CD4-positive, alpha-beta T cell (primary cell): ENCODE measurements at regions of chr10 and their contacts with region 1.

Region 1: GRCh38 chr10:61903221-61903927 is 1.9 kb downstream of the ARID5B start:
- DNase-seq: peak; percentile 42 to 84 (median 62)
- ATAC-seq: peak; percentile 33
- H3K4me3 ChIP-seq: peak overlapping the region; percentile 92
- H3K4me3 Mint-ChIP-seq: peak overlapping the region; percentile 94
- H3K27ac ChIP-seq: peak overlapping the region; percentile 92 to 98
- H3K27ac Mint-ChIP-seq: peak overlapping the region; percentile 91
- H3K4me1 ChIP-seq: peaks cover 4% of the 10 kb centered on the region
- H3K4me1 Mint-ChIP-seq: peaks cover 51% of the 10 kb centered on the region
- H3K27me3 ChIP-seq: no peaks in the 10 kb centered on the region
- H3K27me3 Mint-ChIP-seq: no peaks in the 10 kb centered on the region
- CTCF ChIP-seq: peak; percentile 49

Region 2: DNA sequence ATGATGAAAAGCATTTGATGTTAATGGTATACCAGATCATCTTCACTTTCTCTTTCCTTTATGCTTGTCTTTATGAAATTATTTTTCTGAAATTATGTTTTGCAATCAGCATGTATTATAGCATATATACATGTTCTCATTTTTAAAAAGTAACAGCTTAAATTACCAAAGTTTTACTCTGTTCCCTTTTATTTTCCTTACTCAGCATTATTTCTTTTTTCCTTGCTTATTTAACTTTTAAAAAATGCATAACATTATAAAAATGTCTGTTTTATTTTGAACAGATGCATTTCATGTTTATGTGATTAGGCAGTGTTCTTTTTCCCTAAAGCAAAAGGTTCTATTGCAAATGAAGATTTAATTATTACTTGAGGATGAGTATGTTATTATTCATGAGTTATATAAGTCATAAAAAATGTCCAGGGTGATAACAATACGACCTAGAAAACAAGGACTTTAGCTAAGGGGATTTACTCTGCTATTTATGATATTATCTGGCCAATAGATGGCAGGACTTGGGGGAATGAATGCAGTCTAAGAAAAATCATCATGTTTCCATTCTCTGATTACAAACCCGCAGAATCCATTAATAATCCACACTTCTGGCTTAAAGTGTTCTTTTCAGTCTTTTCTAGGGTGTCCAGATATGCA is 202.2 kb before region 1 on chr10:
- CTCF ChIA-PET with region 1: no interaction called
- POLR2A ChIA-PET with region 1: no interaction called
- intact Hi-C with region 1: no loop called
- DNase-seq: no peak
- ATAC-seq: no peak
- H3K4me3 ChIP-seq: no peak overlapping the region
- H3K4me3 Mint-ChIP-seq: no peak overlapping the region
- H3K27ac ChIP-seq: no peak overlapping the region
- H3K27ac Mint-ChIP-seq: no peak overlapping the region
- H3K4me1 ChIP-seq: no peaks in the 10 kb centered on the region
- H3K4me1 Mint-ChIP-seq: no peaks in the 10 kb centered on the region
- H3K27me3 ChIP-seq: no peaks in the 10 kb centered on the region
- H3K27me3 Mint-ChIP-seq: no peaks in the 10 kb centered on the region
- CTCF ChIP-seq: no peak

Region 3: DNA sequence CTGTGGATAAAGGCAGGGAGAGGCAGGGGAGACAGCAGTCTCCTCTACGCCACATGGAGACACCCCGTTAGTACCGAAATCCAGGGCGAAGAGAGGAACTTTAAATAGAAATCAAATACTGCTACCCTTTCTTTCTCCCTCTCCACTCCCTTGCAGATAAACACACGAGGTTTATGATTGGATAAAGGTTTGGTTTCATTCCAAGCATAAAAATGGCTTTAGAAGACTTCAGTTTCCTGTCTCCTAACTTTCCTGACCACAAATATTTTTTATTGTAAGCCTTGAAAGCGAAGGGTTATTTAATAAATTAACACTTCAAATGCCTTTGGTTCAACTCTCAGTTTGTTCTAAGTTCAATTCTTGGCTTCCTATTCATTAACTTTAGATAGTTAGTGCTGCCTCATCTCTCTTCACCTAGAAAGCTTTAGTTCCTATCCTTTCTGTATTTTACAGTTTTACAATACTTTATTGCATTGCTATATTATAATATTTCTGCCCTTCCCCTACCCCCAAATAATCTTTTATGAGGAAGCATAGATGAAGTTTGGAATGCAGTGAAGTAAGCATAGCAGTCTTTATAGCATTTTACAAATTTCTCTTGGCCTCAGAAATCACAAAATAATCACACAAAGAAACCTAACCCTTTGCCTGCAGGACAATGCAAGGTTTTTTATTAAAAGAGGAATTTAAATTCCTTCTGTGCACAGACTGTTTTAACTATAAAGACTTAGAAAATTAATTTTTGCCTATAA is 33.4 kb before region 1 on chr10:
- CTCF ChIA-PET with region 1: interaction called, 3 read pairs
- POLR2A ChIA-PET with region 1: interaction called, 12 read pairs
- intact Hi-C with region 1: no loop called
- DNase-seq: no peak
- ATAC-seq: no peak
- H3K4me3 ChIP-seq: no peak overlapping the region
- H3K4me3 Mint-ChIP-seq: no peak overlapping the region
- H3K27ac ChIP-seq: no peak overlapping the region
- H3K27ac Mint-ChIP-seq: no peak overlapping the region
- H3K4me1 ChIP-seq: peaks cover 5% of the 10 kb centered on the region
- H3K4me1 Mint-ChIP-seq: no peaks in the 10 kb centered on the region
- H3K27me3 ChIP-seq: no peaks in the 10 kb centered on the region
- H3K27me3 Mint-ChIP-seq: no peaks in the 10 kb centered on the region
- CTCF ChIP-seq: no peak

Region 4: GRCh38 chr10:61929555-61929954 is 26.2 kb after region 1 on chr10:
- CTCF ChIA-PET with region 1: interaction called, 4 read pairs
- POLR2A ChIA-PET with region 1: interaction called, 28 read pairs
- intact Hi-C with region 1: no loop called
- DNase-seq: no peak
- ATAC-seq: no peak
- H3K4me3 ChIP-seq: no peak overlapping the region
- H3K4me3 Mint-ChIP-seq: no peak overlapping the region
- H3K27ac ChIP-seq: no peak overlapping the region
- H3K27ac Mint-ChIP-seq: no peak overlapping the region
- H3K4me1 ChIP-seq: peaks cover 31% of the 10 kb centered on the region
- H3K4me1 Mint-ChIP-seq: peaks cover 49% of the 10 kb centered on the region
- H3K27me3 ChIP-seq: no peaks in the 10 kb centered on the region
- H3K27me3 Mint-ChIP-seq: no peaks in the 10 kb centered on the region
- CTCF ChIP-seq: no peak

Region 5: DNA sequence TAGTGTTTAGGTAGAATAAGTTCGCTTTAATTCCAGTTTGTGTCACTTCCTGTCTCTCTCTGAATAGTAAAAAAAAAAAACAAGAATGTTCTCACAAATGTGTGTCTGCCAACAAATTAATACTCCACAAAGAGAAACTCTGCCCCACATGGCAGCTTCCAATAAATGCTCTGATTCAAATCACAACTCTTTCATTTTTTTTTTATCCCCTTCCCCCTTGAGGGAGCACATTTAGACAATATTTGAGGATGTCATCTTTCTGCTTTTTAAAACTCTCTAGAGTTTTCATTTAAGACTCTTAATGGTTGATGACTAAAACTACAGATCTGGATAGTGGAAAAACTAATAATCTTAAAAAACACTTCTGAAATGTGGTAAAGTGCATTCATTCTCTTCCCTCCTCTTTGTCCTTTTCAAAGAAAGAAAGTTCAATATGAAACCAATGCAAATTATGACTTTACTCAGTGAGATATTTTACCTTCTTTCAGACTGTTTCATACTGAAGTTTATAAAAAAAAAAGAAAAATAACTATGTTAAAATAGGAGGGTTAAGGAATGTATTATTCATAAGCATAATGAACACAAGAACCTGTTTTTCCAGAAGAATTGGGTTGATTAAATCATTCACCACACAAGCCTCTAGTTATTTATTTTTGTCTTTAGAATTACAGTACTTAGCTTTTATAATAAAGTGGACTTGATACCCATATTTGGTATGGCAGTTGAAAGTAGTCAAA is 40.5 kb after region 1 on chr10:
- CTCF ChIA-PET with region 1: interaction called, 8 read pairs
- POLR2A ChIA-PET with region 1: interaction called, 27 read pairs
- intact Hi-C with region 1: loop called (anchors 1 to 2 kb)
- DNase-seq: peak in 5 of 14 experiments; percentile 9 to 79 (median 63)
- ATAC-seq: peak; percentile 73
- H3K4me3 ChIP-seq: peak overlapping the region; percentile 38
- H3K4me3 Mint-ChIP-seq: peak overlapping the region; percentile 59
- H3K27ac ChIP-seq: peak overlapping the region in 1 of 2 donors; percentile 71
- H3K27ac Mint-ChIP-seq: peak overlapping the region; percentile 82
- H3K4me1 ChIP-seq: peaks cover 12% of the 10 kb centered on the region
- H3K4me1 Mint-ChIP-seq: peaks cover 55% of the 10 kb centered on the region
- H3K27me3 ChIP-seq: no peaks in the 10 kb centered on the region
- H3K27me3 Mint-ChIP-seq: no peaks in the 10 kb centered on the region
- CTCF ChIP-seq: peak; percentile 22

Region 6: GRCh38 chr10:61992671-61993668 is 89.6 kb after region 1 on chr10:
- CTCF ChIA-PET with region 1: interaction called, 14 read pairs
- POLR2A ChIA-PET with region 1: interaction called, 51 read pairs
- intact Hi-C with region 1: loop called (anchors 1 to 5 kb)
- DNase-seq: peak in 12 of 14 experiments; percentile 29 to 89 (median 53)
- ATAC-seq: peak; percentile 83
- H3K4me3 ChIP-seq: peak overlapping the region; percentile 15
- H3K4me3 Mint-ChIP-seq: peak overlapping the region; percentile 31
- H3K27ac ChIP-seq: peak overlapping the region; percentile 62 to 64
- H3K27ac Mint-ChIP-seq: peak overlapping the region; percentile 85
- H3K4me1 ChIP-seq: peaks cover 14% of the 10 kb centered on the region
- H3K4me1 Mint-ChIP-seq: peaks cover 73% of the 10 kb centered on the region
- H3K27me3 ChIP-seq: no peaks in the 10 kb centered on the region
- H3K27me3 Mint-ChIP-seq: no peaks in the 10 kb centered on the region
- CTCF ChIP-seq: no peak

Region 7: GRCh38 chr10:62050893-62051433 is 147.6 kb after region 1 on chr10:
- CTCF ChIA-PET with region 1: interaction called, 14 read pairs
- POLR2A ChIA-PET with region 1: interaction called, 70 read pairs
- intact Hi-C with region 1: loop called in 1 of 2 experiments (anchors 2 kb)
- DNase-seq: peak; percentile 54 to 93 (median 72)
- ATAC-seq: peak; percentile 81
- H3K4me3 ChIP-seq: peak overlapping the region; percentile 60
- H3K4me3 Mint-ChIP-seq: peak overlapping the region; percentile 83
- H3K27ac ChIP-seq: peak overlapping the region; percentile 83 to 87
- H3K27ac Mint-ChIP-seq: peak overlapping the region; percentile 91
- H3K4me1 ChIP-seq: peaks cover 64% of the 10 kb centered on the region
- H3K4me1 Mint-ChIP-seq: peaks cover 97% of the 10 kb centered on the region
- H3K27me3 ChIP-seq: no peaks in the 10 kb centered on the region
- H3K27me3 Mint-ChIP-seq: no peaks in the 10 kb centered on the region
- CTCF ChIP-seq: no peak

Region 8: GRCh38 chr10:62175251-62175650 is 271.9 kb after region 1 on chr10:
- CTCF ChIA-PET with region 1: no interaction called
- POLR2A ChIA-PET with region 1: no interaction called
- intact Hi-C with region 1: no loop called
- DNase-seq: no peak
- ATAC-seq: no peak
- H3K4me3 ChIP-seq: no peak overlapping the region
- H3K4me3 Mint-ChIP-seq: no peak overlapping the region
- H3K27ac ChIP-seq: no peak overlapping the region
- H3K27ac Mint-ChIP-seq: no peak overlapping the region
- H3K4me1 ChIP-seq: peaks cover under 1% of the 10 kb centered on the region
- H3K4me1 Mint-ChIP-seq: peaks cover 47% of the 10 kb centered on the region
- H3K27me3 ChIP-seq: no peaks in the 10 kb centered on the region
- H3K27me3 Mint-ChIP-seq: no peaks in the 10 kb centered on the region
- CTCF ChIP-seq: no peak

Region 9: DNA sequence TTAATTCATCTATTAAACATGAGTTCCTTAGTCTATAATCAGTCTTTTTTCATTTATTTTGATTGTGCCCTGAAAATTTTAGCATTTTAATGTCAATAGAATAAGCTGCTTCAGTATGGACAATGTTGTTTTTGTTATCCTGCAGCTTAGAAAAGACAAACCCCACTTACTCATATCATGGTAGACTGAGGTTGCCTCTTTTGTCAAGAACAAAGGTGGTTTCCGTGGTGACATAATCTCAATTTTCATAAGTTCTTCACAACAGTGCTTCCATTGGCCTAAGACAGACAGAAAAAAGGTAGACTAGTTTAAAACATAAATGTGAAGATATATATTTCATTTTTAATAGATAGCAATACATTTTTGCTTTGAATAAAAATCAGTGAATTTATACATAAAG is 296.2 kb after region 1 on chr10:
- CTCF ChIA-PET with region 1: no interaction called
- POLR2A ChIA-PET with region 1: no interaction called
- intact Hi-C with region 1: loop called (anchors 5 kb)
- DNase-seq: peak in 3 of 14 experiments; percentile 46 to 58 (median 57)
- ATAC-seq: peak; percentile 75
- H3K4me3 ChIP-seq: no peak overlapping the region
- H3K4me3 Mint-ChIP-seq: no peak overlapping the region
- H3K27ac ChIP-seq: no peak overlapping the region
- H3K27ac Mint-ChIP-seq: peak overlapping the region; percentile 25
- H3K4me1 ChIP-seq: peaks cover 5% of the 10 kb centered on the region
- H3K4me1 Mint-ChIP-seq: peaks cover 39% of the 10 kb centered on the region
- H3K27me3 ChIP-seq: no peaks in the 10 kb centered on the region
- H3K27me3 Mint-ChIP-seq: no peaks in the 10 kb centered on the region
- CTCF ChIP-seq: no peak